ENCODE measurements at regions of chr15 and their contacts with region 1.

Region 1: GRCh38 chr15:56918046-56918938 is at the start of gene TCF12:
- DNase-seq: peak; percentile 95 to 96 (median 95)
- ATAC-seq: peak; percentile 91 to 97 (median 93)
- H3K4me3 ChIP-seq: peak within 1 kb of the TSS; percentile 66 to 90 (median 87)
- H3K27ac ChIP-seq: peak within 1 kb of the TSS; percentile 91 to 96 (median 94)
- H3K4me1 ChIP-seq: peaks cover 0 to 17% (median 3%) of the 10 kb centered on the region in 4 donors
- H3K27me3 ChIP-seq: no peaks in the 10 kb centered on the region
- CTCF ChIP-seq: peak; percentile 37 to 53 (median 42)
- POLR2A ChIP-seq: peak; percentile 82
- total RNA-seq, gene TCF12: 28.9 to 41.9 (median 35.3) TPM

Region 2: DNA sequence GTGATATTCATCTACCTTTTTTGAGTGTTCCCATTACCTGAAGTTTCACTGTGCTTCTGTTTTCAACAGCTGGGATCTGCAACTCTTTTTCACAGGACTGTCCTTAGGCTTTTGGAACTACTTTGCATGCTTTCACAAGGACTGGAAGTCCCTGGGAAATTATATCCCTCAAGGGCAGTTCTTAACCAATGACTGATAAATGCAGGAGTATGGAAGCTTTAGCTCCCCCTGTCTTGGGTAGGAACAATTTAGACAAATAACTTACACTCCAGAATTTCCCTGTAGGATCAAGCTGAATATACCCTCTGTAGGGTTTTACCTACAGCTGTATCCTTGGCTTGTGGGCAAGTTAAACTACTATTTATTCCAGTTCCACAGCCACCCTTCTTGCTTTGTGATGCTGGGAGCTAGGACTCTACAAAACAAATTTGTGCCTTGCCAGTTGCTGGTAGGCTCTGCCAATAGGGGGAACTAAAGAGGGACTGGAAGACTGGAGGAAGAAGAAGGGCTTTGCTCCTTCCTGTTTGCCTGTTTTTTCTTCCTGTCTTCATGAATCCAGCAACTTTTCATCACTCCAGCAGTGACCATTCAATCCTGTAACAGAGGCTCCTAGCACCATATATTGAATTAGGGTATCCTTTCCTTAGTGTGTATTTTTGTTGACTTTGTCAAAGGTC is 178.2 kb before region 1 on chr15:
- intact Hi-C with region 1: no loop called
- DNase-seq: no peak
- ATAC-seq: no peak
- H3K4me3 ChIP-seq: no peak overlapping the region
- H3K27ac ChIP-seq: no peak overlapping the region
- H3K4me1 ChIP-seq: peaks cover 0 to 19% (median 0%) of the 10 kb centered on the region in 4 donors
- H3K27me3 ChIP-seq: no peaks in the 10 kb centered on the region
- CTCF ChIP-seq: peak in 1 of 4 donors; percentile 5
- POLR2A ChIP-seq: no peak

Region 3: GRCh38 chr15:57138349-57138788 is 220.1 kb after region 1 on chr15:
- intact Hi-C with region 1: loop called in 1 of 2 experiments (anchors 10 kb)
- DNase-seq: no peak
- ATAC-seq: peak; percentile 82 to 87 (median 86)
- H3K4me3 ChIP-seq: no peak overlapping the region
- H3K27ac ChIP-seq: no peak overlapping the region
- H3K4me1 ChIP-seq: peaks cover 0 to 8% (median 0%) of the 10 kb centered on the region in 4 donors
- H3K27me3 ChIP-seq: no peaks in the 10 kb centered on the region
- CTCF ChIP-seq: peak; percentile 80 to 84 (median 80)
- POLR2A ChIP-seq: no peak

Measured in right lobe of liver (tissue), 6 donors.